A673 (cell line): ENCODE measurements at regions of chr3 and their contacts with region 1.

Region 1: DNA sequence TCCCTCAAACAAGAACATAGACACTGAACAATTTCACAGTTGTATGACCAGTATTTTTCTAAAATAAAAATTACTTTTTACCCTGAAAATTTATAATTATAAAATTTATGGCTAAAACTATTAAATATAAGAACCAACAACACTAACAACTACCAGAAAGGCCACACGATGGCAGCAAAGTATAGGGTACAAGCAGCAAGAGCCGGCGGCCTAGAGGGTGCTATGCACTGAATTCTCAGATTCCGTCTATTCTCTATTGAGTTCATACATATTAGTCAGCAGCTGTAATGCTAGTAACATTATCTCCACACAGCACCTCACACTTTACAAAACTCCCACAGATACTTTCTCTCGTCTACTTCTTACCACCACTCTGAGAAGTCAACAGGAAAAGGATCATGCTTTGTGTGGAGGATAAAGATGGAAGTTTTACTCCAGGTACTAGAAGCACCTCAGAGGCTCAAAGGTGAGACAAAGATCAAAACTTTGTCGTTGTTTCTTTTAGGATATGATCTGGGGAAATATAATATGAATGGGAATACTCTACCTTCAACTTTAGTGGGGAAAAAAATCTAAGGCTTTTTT is 160.5 kb downstream of the FGF12 start:
- DNase-seq: peak; percentile 76
- H3K4me3 ChIP-seq: no peak overlapping the region
- H3K27ac ChIP-seq: no peak overlapping the region
- H3K4me1 ChIP-seq: peaks cover 6% of the 10 kb centered on the region
- H3K27me3 ChIP-seq: peaks cover 6% of the 10 kb centered on the region
- CTCF ChIP-seq: peak; percentile 80

Region 2: GRCh38 chr3:191592105-191592504 is 974.7 kb before region 1 on chr3:
- CTCF ChIA-PET with region 1: no interaction called
- POLR2A ChIA-PET with region 1: no interaction called
- intact Hi-C with region 1: no loop called
- DNase-seq: peak; percentile 39
- H3K4me3 ChIP-seq: no peak overlapping the region
- H3K27ac ChIP-seq: no peak overlapping the region
- H3K4me1 ChIP-seq: peaks cover 9% of the 10 kb centered on the region
- H3K27me3 ChIP-seq: no peaks in the 10 kb centered on the region
- CTCF ChIP-seq: no peak

Region 3: DNA sequence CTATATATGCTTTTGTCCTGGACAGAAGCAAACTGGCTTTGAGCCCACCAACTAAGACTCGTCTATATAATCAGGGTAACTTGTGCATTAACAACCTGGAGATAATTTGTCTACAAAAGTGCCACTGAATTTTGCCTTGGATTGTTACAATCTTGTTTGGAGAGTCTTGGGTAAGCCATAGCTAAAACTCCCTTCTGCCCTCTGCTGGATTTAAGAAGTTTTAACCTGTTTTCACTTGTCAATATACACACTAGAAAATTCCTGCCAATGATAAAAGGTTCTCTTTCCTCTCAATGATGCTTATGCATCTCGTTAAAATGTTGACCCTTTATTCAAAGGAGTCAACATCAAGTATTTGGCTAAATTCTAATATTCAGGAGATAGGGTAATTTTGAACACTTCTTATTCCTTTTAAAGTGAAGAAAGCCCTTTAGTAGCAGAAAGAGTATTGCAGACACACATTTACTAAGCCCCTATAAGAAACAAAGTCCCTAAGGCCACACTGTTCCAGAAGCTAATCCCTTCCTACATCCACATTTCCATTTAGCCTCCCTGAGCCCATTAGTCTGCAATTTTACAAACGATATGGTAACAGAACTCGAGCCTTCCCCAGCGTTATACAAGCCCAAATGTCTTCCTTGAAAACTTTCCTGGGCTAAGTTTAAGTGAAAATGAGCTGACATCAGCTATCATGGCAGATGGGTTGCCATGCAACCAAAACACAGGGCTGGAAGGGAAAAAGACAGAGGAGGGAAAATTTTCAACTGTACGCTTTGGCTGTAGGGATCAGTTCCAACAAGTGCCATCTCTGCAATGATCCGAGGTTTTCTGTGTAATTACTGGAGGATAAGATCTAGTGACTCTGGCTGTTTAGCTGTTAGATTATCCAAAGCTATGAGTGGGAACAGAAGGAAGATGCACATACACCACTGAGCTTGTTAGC is 236.4 kb after region 1 on chr3:
- CTCF ChIA-PET with region 1: interaction called, 4 read pairs
- POLR2A ChIA-PET with region 1: no interaction called
- intact Hi-C with region 1: loop called (anchors 1 kb)
- DNase-seq: peak; percentile 65
- H3K4me3 ChIP-seq: no peak overlapping the region
- H3K27ac ChIP-seq: no peak overlapping the region
- H3K4me1 ChIP-seq: no peaks in the 10 kb centered on the region
- H3K27me3 ChIP-seq: no peaks in the 10 kb centered on the region
- CTCF ChIP-seq: peak; percentile 68

Region 4: DNA sequence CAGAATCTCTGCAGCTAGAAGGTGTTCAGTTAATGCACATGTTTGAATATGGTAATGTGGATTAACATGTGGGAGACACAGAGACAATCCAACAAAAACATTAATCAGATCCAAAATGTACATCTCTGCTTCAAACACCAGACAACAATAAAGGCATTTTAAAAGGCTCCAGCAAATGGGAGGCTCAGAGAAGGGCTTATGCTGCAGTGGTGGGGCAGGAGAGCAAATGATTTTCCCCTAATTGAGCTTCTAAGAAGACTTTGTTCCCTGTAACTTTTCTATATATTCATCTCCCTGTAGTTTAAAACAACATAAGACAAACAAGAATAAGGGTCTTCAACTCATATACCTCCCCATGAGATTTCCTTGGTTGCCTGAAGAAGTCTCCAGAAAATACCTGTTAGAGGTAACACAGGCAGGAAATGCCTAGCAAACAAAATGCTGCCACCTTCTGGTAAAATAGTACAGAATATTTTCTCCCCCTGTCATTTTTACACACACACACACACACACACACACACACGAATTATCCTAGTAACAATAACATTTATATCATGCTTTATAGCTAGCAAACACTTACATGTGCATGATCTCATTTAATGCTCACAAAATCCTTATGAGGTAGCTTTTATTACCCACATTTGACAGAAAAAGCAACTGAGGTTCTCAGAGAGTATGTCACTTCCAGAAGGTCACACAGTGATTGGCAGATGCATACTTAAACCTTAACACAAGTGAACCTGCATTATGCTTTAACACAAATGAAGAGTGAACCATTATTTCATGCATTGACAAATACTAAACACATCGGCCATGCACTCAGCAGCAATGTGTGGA is 474.3 kb after region 1 on chr3:
- CTCF ChIA-PET with region 1: no interaction called
- POLR2A ChIA-PET with region 1: no interaction called
- intact Hi-C with region 1: loop called (anchors 10 kb)
- DNase-seq: peak; percentile 54
- H3K4me3 ChIP-seq: no peak overlapping the region
- H3K27ac ChIP-seq: no peak overlapping the region
- H3K4me1 ChIP-seq: no peaks in the 10 kb centered on the region
- H3K27me3 ChIP-seq: no peaks in the 10 kb centered on the region
- CTCF ChIP-seq: peak; percentile 67

Region 5: DNA sequence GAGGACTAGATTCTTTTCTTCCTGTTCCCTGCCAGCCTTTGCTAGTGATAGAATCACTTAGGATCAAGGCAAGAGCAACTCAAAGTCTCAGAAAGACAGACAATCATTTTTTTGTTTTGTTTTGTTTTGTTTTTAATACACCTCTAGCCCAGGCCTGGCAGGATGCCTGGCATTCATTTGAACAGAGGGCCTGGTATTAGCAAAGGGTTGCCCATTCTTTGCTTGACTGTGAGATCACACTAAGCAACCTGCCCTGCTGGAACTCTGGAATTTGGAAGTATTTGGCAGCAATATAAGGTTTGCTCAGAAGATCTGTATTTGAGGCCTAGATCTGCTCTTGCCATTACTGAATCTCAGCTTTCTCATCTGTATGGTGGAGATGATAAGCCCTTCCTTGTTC is 833.5 kb after region 1 on chr3:
- CTCF ChIA-PET with region 1: no interaction called
- POLR2A ChIA-PET with region 1: no interaction called
- intact Hi-C with region 1: no loop called
- DNase-seq: no peak
- H3K4me3 ChIP-seq: no peak overlapping the region
- H3K27ac ChIP-seq: no peak overlapping the region
- H3K4me1 ChIP-seq: no peaks in the 10 kb centered on the region
- H3K27me3 ChIP-seq: no peaks in the 10 kb centered on the region
- CTCF ChIP-seq: no peak